T-cell (primary cell): ENCODE measurements at regions of chr12 and their contacts with region 1.

Region 1: DNA sequence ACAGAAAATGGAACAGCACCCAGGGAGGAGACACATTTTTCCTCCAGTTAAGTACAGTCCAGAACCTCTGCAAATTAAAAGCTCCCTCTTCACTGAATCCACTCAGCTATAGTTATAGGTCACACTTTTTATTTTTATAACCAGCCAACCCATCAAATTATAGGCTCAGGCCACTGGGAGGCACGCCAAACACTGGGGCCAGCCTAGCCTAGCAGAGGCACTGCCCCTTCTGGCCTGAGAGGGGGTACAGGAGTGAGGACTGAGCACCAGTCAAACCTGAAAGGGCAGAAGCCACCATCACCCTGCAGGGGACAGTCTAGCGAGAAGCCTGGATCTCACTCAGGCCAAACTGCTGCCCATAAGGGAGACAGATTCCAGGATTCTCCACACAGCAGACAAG is 19.3 kb downstream of the FMNL3 start:
- DNase-seq: no peak
- ATAC-seq: no peak
- H3K4me3 ChIP-seq: no peak overlapping the region
- H3K4me3 Mint-ChIP-seq: no peak overlapping the region
- H3K27ac ChIP-seq: no peak overlapping the region
- H3K27ac Mint-ChIP-seq: peak overlapping the region in 1 of 2 donors; percentile 19
- H3K4me1 ChIP-seq: peaks cover 24 to 25% of the 10 kb centered on the region in 2 experiments
- H3K4me1 Mint-ChIP-seq: peaks cover 60 to 75% (median 62%) of the 10 kb centered on the region in 3 donors
- H3K27me3 ChIP-seq: no peaks in the 10 kb centered on the region
- H3K27me3 Mint-ChIP-seq: no peaks in the 10 kb centered on the region

Region 2: GRCh38 chr12:50672158-50672557 is 984.2 kb after region 1 on chr12:
- CTCF ChIA-PET with region 1: no interaction called
- POLR2A ChIA-PET with region 1: interaction called in 1 of 2 experiments, 10 read pairs
- DNase-seq: no peak
- ATAC-seq: no peak
- H3K4me3 ChIP-seq: no peak overlapping the region
- H3K4me3 Mint-ChIP-seq: no peak overlapping the region
- H3K27ac ChIP-seq: no peak overlapping the region
- H3K27ac Mint-ChIP-seq: no peak overlapping the region
- H3K4me1 ChIP-seq: no peaks in the 10 kb centered on the region
- H3K4me1 Mint-ChIP-seq: peaks cover 0 to 12% (median 3%) of the 10 kb centered on the region in 3 donors
- H3K27me3 ChIP-seq: no peaks in the 10 kb centered on the region
- H3K27me3 Mint-ChIP-seq: no peaks in the 10 kb centered on the region